ENCODE measurements at regions of chr6 and their contacts with region 1.

Region 1: GRCh38 chr6:106979427-106979884 is 4.9 kb upstream of the CD24 start:
- DNase-seq: peak; percentile 91
- H3K4me3 ChIP-seq: no peak overlapping the region
- H3K27ac ChIP-seq: no peak overlapping the region
- H3K4me1 ChIP-seq: peaks cover 27% of the 10 kb centered on the region
- CTCF ChIP-seq: peak; percentile 99

Region 2: DNA sequence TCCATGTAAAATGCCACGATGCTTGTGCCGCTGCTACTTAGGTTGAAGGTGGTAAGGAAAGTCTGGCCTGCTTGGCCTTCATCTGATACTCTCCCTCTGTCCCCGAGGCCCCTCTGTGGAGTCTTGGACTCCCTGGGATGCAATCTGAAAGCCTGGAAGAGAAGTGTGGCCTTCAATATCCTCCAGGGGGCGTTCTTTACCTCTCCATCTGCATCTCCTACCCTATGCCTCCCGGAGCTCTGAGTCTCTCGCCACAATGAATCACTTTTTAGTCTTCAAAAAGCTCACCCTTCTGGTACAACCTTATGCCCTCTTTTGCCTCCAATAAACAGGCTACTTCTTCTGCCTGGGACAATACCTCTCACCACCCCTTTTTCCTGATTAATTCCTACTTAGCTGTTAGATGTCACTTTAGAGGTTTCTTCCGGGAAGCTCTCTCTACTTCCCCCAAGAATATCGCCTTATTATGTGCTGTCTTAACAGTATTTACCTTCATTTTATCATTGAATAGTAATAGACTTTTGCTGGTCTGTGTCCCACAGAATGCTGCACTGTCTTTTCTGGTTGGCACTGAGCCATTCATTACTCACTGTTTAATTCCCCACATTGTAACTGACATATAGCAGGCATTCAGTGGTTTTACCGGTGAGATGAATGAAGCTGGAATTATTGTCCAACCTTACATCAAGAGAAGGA is 640.0 kb before region 1 on chr6:
- CTCF ChIA-PET with region 1: no interaction called
- POLR2A ChIA-PET with region 1: no interaction called
- intact Hi-C with region 1: loop called (anchors 5 kb)
- DNase-seq: peak; percentile 65
- H3K4me3 ChIP-seq: no peak overlapping the region
- H3K27ac ChIP-seq: no peak overlapping the region
- H3K4me1 ChIP-seq: no peaks in the 10 kb centered on the region
- CTCF ChIP-seq: peak; percentile 86

Region 3: DNA sequence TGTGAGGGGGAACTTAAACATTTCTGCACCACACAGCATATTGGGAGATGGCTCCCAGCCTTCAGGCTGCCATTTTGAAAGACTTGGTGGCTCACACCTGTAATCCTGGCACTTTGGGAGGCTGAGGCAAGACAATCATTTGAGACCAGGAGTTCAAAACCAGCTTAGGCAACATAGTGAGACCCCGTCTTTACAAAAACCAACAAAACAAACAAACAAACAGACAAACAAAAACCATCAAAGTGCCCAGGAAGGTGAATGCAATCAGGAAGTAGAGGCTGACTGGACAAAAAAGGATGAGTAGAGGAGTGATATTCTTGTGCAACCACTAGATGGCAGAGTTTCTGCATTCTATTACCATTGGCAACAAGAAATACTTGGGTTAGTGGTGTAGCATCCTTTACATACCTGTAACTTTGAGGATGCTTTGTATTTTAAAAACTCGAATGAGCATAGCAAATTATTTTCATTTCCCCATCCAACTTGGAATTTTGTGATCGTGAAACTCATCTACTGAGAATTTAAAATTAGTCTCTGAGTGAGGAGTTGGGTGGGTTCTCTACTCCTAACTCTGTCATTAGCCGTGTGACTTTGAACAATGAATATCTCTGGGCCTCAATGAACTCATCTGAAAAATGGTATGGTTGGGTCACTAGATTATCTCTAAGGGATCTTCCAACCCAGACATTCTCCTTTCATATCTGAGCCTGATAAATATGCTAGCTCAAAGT is 534.5 kb before region 1 on chr6:
- CTCF ChIA-PET with region 1: no interaction called
- POLR2A ChIA-PET with region 1: interaction called, 3 read pairs
- intact Hi-C with region 1: loop called (anchors 1 kb)
- DNase-seq: peak; percentile 85
- H3K4me3 ChIP-seq: no peak overlapping the region
- H3K27ac ChIP-seq: no peak overlapping the region
- H3K4me1 ChIP-seq: no peaks in the 10 kb centered on the region
- CTCF ChIP-seq: peak; percentile 94

Region 4: GRCh38 chr6:106450653-106451052 is 528.8 kb before region 1 on chr6:
- CTCF ChIA-PET with region 1: no interaction called
- POLR2A ChIA-PET with region 1: no interaction called
- intact Hi-C with region 1: loop called (anchors 1 kb)
- DNase-seq: no peak
- H3K4me3 ChIP-seq: no peak overlapping the region
- H3K27ac ChIP-seq: no peak overlapping the region
- H3K4me1 ChIP-seq: no peaks in the 10 kb centered on the region
- CTCF ChIP-seq: no peak

Region 5: DNA sequence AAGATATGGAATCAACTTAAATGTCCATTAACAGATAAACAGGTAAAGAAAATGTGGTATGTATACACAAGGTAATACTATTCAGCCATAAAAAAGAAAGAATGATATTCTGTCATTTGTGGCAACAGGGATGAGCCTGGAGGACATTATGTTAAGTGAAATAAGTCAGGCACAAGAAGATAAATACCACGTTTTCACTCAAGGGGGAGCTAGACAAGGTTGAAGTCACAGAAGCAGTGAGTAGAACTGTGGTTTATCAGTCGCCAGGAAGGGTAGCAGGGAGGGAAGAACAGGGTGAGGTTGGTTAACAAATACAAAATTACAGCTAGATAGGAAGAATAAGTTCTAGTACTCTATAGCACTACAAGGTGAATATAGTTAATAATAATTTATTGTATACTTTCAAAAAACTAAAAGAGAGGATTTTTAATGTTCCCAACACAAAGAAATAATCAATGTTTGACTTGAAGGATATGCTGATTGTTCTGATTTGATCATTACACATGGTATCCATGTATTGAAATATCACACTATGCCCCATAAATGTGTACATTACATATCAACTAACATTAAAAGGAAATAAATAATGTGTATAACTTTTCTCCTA is 371.3 kb before region 1 on chr6:
- CTCF ChIA-PET with region 1: no interaction called
- POLR2A ChIA-PET with region 1: interaction called, 9 read pairs
- intact Hi-C with region 1: loop called (anchors 1 kb)
- DNase-seq: peak; percentile 82
- H3K4me3 ChIP-seq: no peak overlapping the region
- H3K27ac ChIP-seq: no peak overlapping the region
- H3K4me1 ChIP-seq: peaks cover 51% of the 10 kb centered on the region
- CTCF ChIP-seq: peak; percentile 87

Region 6: GRCh38 chr6:106629103-106629858 is 350.2 kb before region 1 on chr6 and contains the starts of genes QRSL1 and RTN4IP1:
- CTCF ChIA-PET with region 1: no interaction called
- POLR2A ChIA-PET with region 1: interaction called, 8 read pairs
- intact Hi-C with region 1: loop called (anchors 2 kb)
- DNase-seq: peak; percentile 95
- H3K4me3 ChIP-seq: peak within 1 kb of the TSS; percentile 83
- H3K27ac ChIP-seq: peak within 1 kb of the TSS; percentile 98
- H3K4me1 ChIP-seq: peaks cover 54% of the 10 kb centered on the region
- CTCF ChIP-seq: no peak
- total RNA-seq, gene QRSL1: 63.9 and 65.7 TPM in 2 replicates
- total RNA-seq, gene RTN4IP1: 25.2 TPM in 2 replicates

Region 7: GRCh38 chr6:106997390-106998158 is 18.1 kb after region 1 on chr6:
- CTCF ChIA-PET with region 1: interaction called, 5 read pairs
- POLR2A ChIA-PET with region 1: no interaction called
- intact Hi-C with region 1: loop called (anchors 1 kb)
- DNase-seq: peak; percentile 87
- H3K4me3 ChIP-seq: no peak overlapping the region
- H3K27ac ChIP-seq: no peak overlapping the region
- H3K4me1 ChIP-seq: peaks cover 4% of the 10 kb centered on the region
- CTCF ChIP-seq: peak; percentile 99